Gastrocnemius medialis (tissue), 4 donors: ENCODE measurements at regions of chr2 and their contacts with region 1.

Region 1: DNA sequence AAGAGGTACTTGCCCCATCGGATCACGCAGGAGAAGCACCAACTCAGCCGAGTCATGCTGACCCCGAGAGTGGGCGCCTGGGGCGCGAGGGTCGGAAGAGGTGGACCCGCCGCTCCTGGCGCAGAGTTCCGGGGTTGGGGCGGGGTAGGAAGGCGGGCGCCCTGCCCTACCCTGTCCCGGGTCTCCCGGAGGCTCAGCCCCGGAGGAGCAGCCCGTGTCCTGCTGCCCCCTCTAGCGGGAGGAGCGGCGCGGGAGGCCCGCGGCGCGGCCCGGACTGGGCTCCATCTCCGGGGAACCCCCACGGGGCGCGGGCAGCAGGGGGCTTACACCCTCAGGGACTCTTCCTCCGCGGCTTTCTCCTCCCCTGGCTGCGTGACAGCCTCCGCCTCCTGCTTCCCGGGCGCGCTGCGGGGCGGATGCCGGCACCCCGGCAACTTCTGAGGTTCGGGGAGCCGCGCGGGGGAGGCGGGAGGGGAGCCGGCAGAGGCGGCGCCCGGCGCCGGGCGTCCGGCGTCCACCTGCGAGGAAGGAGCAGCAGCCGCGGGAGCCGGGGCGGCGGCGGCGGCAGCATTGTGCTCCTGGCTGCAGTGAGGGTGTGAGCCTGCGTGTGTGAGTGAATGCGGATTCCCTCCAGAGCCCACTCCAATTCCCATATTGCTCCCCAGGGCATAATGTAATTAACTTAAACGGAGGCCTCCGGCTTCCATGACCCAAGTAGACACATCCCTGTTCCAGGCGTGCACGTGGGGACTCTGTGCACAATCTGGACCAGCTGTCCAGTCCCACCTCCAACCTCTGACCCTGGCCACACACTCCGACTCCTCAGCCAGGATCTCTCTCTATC is 7.6 kb upstream of the TNS1 start:
- DNase-seq: no peak
- ATAC-seq: peak; percentile 63 to 72
- H3K4me3 ChIP-seq: peak overlapping the region; percentile 55 to 77 (median 70)
- H3K27ac ChIP-seq: peak overlapping the region in 3 of 4 donors; percentile 26 to 59 (median 42)
- H3K4me1 ChIP-seq: peaks cover 28 to 53% of the 10 kb centered on the region in 2 donors
- H3K27me3 ChIP-seq: no peaks in the 10 kb centered on the region
- CTCF ChIP-seq: peak in 4 of 5 experiments; percentile 51 to 79 (median 66)
- POLR2A ChIP-seq: no peak

Region 2: DNA sequence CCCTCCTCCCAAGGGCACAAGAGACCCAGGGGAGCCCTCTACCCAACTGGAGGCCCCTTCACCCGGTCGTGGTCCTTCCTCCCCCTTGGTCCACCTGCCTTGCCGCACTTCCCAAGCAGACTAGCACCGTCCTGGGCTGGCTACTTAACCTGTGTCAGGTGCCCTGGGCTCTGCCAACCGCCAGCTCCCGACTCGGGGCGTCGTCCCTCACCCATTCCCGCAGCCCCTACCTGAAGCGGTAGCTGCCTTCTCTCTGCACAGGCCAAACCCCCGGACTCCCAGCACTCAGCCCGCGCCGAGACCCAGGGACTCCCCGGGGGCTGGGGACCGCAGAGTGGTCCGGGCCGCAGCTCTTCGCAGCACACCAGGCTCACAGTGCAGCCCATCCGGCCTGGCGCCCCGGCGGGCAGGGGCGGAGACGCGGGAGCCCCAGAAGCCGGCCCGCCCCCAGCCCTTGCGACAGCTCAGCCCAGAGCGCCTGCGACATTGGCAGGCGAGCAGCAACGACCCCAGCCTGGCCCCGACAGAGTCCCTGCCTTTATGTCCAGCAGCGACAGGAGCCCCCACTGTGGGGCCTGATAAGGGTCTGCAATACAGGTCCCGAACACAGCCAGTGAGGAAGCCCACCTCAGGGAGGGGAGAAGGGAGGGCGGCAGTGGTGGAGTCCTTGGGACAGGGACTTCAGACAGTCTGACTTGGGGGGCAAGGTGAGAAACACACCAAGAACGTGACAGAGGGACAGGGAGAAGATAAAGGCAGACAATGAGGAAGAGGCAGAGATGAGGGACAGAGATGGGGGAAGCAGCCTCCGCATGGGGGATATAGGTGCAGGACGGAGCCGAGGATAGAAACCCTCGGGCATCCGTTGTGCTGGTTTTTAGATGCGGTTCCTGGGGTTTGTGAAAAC is 23.5 kb after region 1 on chr2:
- in situ Hi-C with region 1: no loop called
- intact Hi-C with region 1: loop called (anchors 2 kb)
- DNase-seq: peak in 1 of 2 donors; percentile 12
- ATAC-seq: no peak
- H3K4me3 ChIP-seq: no peak overlapping the region
- H3K27ac ChIP-seq: no peak overlapping the region
- H3K4me1 ChIP-seq: peaks cover 11 to 16% of the 10 kb centered on the region in 2 donors
- H3K27me3 ChIP-seq: no peaks in the 10 kb centered on the region
- CTCF ChIP-seq: no peak
- POLR2A ChIP-seq: no peak